GM12878 (cell line): ENCODE measurements at regions of chr10 and their contacts with region 1.

Region 1: GRCh38 chr10:81179805-81180452 is 642.2 kb downstream of the SH2D4B start:
- DNase-seq: peak; percentile 16
- ATAC-seq: peak; percentile 98
- H3K4me3 ChIP-seq: no peak overlapping the region
- H3K27ac ChIP-seq: no peak overlapping the region
- H3K4me1 ChIP-seq: no peaks in the 10 kb centered on the region
- H3K27me3 ChIP-seq: no peaks in the 10 kb centered on the region
- CTCF ChIP-seq: peak; percentile 53 to 71 (median 54); a peak in 5 of 6 replicates
- EP300 ChIP-seq: no peak
- POLR2A ChIP-seq: no peak
- RAD21 ChIP-seq: peak; percentile 88

Region 2: DNA sequence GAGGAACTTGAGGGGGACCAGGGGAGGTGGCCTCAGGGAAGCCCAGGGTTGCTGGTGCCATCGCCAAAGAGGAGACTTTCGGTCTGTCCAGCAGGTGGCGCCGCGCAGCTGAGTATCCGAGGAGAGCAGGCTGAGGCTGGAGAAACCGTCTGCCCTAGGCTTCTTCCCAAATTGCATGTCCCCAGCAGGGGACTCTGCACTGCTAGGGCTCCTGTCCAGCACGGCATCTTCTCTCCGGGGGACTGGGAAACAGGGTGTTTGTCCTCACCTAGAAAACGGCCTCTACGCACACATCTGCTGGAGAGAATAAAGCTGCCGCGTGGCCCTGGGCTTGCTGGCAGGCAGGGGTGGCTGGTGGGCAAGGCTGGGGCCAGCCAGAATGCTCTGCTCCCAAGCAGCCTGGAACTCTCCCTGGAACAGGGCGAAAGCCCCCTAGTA is 480.3 kb before region 1 on chr10:
- CTCF ChIA-PET with region 1: interaction called, 72 read pairs
- POLR2A ChIA-PET with region 1: no interaction called
- RAD21 ChIA-PET with region 1: interaction called, 26 read pairs
- SMC1A ChIA-PET with region 1: interaction called, 28 read pairs
- in situ Hi-C with region 1: loop called (anchors 5 kb)
- intact Hi-C with region 1: loop called (anchors 1 kb)
- DNase-seq: no peak
- ATAC-seq: peak; percentile 96
- H3K4me3 ChIP-seq: no peak overlapping the region
- H3K27ac ChIP-seq: no peak overlapping the region
- H3K4me1 ChIP-seq: no peaks in the 10 kb centered on the region; the same call in 1 of the 2 replicates
- H3K27me3 ChIP-seq: no peaks in the 10 kb centered on the region
- CTCF ChIP-seq: peak; percentile 88 to 92 (median 90)
- EP300 ChIP-seq: no peak
- POLR2A ChIP-seq: no peak
- RAD21 ChIP-seq: peak; percentile 88

Region 3: GRCh38 chr10:80924063-80924952 is 255.6 kb before region 1 on chr10:
- CTCF ChIA-PET with region 1: interaction called, 30 read pairs
- POLR2A ChIA-PET with region 1: no interaction called
- RAD21 ChIA-PET with region 1: interaction called, 14 read pairs
- SMC1A ChIA-PET with region 1: interaction called, 34 read pairs
- in situ Hi-C with region 1: no loop called
- intact Hi-C with region 1: loop called (anchors 1 kb)
- DNase-seq: no peak
- ATAC-seq: peak; percentile 81
- H3K4me3 ChIP-seq: no peak overlapping the region
- H3K27ac ChIP-seq: no peak overlapping the region
- H3K4me1 ChIP-seq: no peaks in the 10 kb centered on the region
- H3K27me3 ChIP-seq: no peaks in the 10 kb centered on the region
- CTCF ChIP-seq: peak; percentile 55 to 69 (median 60)
- EP300 ChIP-seq: no peak
- POLR2A ChIP-seq: no peak
- RAD21 ChIP-seq: peak; percentile 57

Region 4: DNA sequence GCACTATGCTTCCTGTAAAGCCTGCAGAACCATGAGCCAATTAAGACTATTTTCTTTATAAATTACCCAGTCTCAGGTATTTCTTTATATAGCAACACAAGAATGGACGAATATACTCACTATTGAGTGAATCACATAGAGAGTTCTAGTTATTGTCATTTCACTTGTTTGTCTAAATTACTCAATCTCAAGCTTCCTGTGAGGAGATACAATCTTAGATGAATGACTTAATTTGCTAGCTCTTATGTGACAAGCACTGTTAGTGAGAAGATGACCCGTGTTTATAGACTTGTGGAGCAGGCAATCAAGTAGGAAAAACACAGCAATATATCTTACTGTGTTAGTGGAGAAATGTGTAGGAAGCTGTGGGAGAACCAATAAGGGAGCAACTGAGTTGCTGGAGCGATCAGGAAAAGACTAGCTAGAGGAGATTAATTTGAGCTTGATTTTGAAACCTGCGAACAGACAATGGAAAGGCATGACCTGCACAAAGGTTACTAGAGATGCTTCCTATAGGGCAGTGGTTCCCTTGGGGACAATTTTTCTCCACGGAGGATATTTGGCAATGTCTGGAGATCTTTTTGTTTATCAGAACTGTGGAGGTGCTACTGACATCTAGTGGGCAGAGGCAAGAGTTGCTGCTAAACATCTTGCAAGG is 161.1 kb before region 1 on chr10:
- CTCF ChIA-PET with region 1: interaction called, 82 read pairs
- POLR2A ChIA-PET with region 1: no interaction called
- RAD21 ChIA-PET with region 1: interaction called, 55 read pairs
- SMC1A ChIA-PET with region 1: interaction called, 32 read pairs
- in situ Hi-C with region 1: no loop called
- intact Hi-C with region 1: loop called (anchors 1 kb)
- DNase-seq: no peak
- ATAC-seq: peak; percentile 88
- H3K4me3 ChIP-seq: no peak overlapping the region
- H3K27ac ChIP-seq: no peak overlapping the region
- H3K4me1 ChIP-seq: no peaks in the 10 kb centered on the region; the same call in 1 of the 2 replicates
- H3K27me3 ChIP-seq: no peaks in the 10 kb centered on the region
- CTCF ChIP-seq: peak; percentile 72 to 80 (median 73)
- EP300 ChIP-seq: no peak
- POLR2A ChIP-seq: no peak
- RAD21 ChIP-seq: peak; percentile 78

Region 5: GRCh38 chr10:81108516-81109199 is 71.3 kb before region 1 on chr10:
- CTCF ChIA-PET with region 1: interaction called, 40 read pairs
- POLR2A ChIA-PET with region 1: no interaction called
- RAD21 ChIA-PET with region 1: interaction called, 26 read pairs
- SMC1A ChIA-PET with region 1: interaction called, 41 read pairs
- in situ Hi-C with region 1: no loop called
- intact Hi-C with region 1: no loop called
- DNase-seq: peak; percentile 46
- ATAC-seq: peak; percentile 90
- H3K4me3 ChIP-seq: no peak overlapping the region
- H3K27ac ChIP-seq: peak overlapping the region; percentile 1; the same call in 1 of the 2 replicates
- H3K4me1 ChIP-seq: no peaks in the 10 kb centered on the region
- H3K27me3 ChIP-seq: no peaks in the 10 kb centered on the region
- CTCF ChIP-seq: no peak
- EP300 ChIP-seq: peak; percentile 66 to 83; a peak in 3 of 4 replicates
- POLR2A ChIP-seq: no peak
- RAD21 ChIP-seq: no peak

Region 6: GRCh38 chr10:81135851-81136250 is 44.1 kb before region 1 on chr10:
- CTCF ChIA-PET with region 1: interaction called, 9 read pairs
- POLR2A ChIA-PET with region 1: no interaction called
- RAD21 ChIA-PET with region 1: interaction called, 10 read pairs
- SMC1A ChIA-PET with region 1: interaction called, 8 read pairs
- in situ Hi-C with region 1: no loop called
- intact Hi-C with region 1: no loop called
- DNase-seq: peak; percentile 46
- ATAC-seq: peak; percentile 93
- H3K4me3 ChIP-seq: no peak overlapping the region
- H3K27ac ChIP-seq: no peak overlapping the region
- H3K4me1 ChIP-seq: peaks cover 9% of the 10 kb centered on the region
- H3K27me3 ChIP-seq: no peaks in the 10 kb centered on the region
- CTCF ChIP-seq: peak in 1 of 3 experiments; percentile 3; a peak in 1 of 6 replicates
- EP300 ChIP-seq: peak; percentile 63 to 70; a peak in 3 of 4 replicates
- POLR2A ChIP-seq: no peak
- RAD21 ChIP-seq: no peak

Region 7: GRCh38 chr10:81192221-81192788 is 12.4 kb after region 1 on chr10:
- CTCF ChIA-PET with region 1: interaction called, 19 read pairs
- POLR2A ChIA-PET with region 1: no interaction called
- RAD21 ChIA-PET with region 1: interaction called, 7 read pairs
- SMC1A ChIA-PET with region 1: interaction called, 6 read pairs
- in situ Hi-C with region 1: no loop called
- intact Hi-C with region 1: no loop called
- DNase-seq: no peak
- ATAC-seq: no peak
- H3K4me3 ChIP-seq: no peak overlapping the region
- H3K27ac ChIP-seq: no peak overlapping the region
- H3K4me1 ChIP-seq: no peaks in the 10 kb centered on the region
- H3K27me3 ChIP-seq: no peaks in the 10 kb centered on the region
- CTCF ChIP-seq: no peak
- EP300 ChIP-seq: no peak
- POLR2A ChIP-seq: no peak
- RAD21 ChIP-seq: no peak

Region 8: DNA sequence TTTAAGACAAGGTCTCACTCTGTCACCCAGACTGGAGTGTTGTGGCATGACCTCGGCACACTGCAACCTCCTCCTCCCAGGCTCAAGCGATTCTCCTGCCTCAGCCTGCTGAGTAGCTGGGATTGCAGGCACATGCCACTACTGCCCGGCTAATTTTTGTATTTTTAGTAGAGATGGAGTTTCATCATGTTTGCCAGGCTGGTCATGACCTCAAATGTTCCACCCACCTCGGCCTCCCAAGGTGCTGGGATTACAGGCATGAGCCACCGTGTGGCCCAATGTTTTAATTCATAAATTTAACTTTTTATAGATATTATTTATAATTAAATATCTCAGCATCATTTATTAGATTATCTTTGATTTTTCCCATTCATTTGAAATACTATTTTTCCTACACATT is 37.0 kb after region 1 on chr10:
- CTCF ChIA-PET with region 1: no interaction called
- POLR2A ChIA-PET with region 1: no interaction called
- RAD21 ChIA-PET with region 1: no interaction called
- SMC1A ChIA-PET with region 1: no interaction called
- in situ Hi-C with region 1: no loop called
- intact Hi-C with region 1: no loop called
- DNase-seq: no peak
- ATAC-seq: no peak; the same call in 2 of the 3 replicates
- H3K4me3 ChIP-seq: no peak overlapping the region
- H3K27ac ChIP-seq: no peak overlapping the region
- H3K4me1 ChIP-seq: no peaks in the 10 kb centered on the region
- H3K27me3 ChIP-seq: no peaks in the 10 kb centered on the region
- CTCF ChIP-seq: no peak
- EP300 ChIP-seq: no peak
- POLR2A ChIP-seq: no peak
- RAD21 ChIP-seq: no peak